Naive thymus-derived CD4-positive, alpha-beta T cell (primary cell): ENCODE measurements at regions of chr12 and their contacts with region 1.

Region 1: DNA sequence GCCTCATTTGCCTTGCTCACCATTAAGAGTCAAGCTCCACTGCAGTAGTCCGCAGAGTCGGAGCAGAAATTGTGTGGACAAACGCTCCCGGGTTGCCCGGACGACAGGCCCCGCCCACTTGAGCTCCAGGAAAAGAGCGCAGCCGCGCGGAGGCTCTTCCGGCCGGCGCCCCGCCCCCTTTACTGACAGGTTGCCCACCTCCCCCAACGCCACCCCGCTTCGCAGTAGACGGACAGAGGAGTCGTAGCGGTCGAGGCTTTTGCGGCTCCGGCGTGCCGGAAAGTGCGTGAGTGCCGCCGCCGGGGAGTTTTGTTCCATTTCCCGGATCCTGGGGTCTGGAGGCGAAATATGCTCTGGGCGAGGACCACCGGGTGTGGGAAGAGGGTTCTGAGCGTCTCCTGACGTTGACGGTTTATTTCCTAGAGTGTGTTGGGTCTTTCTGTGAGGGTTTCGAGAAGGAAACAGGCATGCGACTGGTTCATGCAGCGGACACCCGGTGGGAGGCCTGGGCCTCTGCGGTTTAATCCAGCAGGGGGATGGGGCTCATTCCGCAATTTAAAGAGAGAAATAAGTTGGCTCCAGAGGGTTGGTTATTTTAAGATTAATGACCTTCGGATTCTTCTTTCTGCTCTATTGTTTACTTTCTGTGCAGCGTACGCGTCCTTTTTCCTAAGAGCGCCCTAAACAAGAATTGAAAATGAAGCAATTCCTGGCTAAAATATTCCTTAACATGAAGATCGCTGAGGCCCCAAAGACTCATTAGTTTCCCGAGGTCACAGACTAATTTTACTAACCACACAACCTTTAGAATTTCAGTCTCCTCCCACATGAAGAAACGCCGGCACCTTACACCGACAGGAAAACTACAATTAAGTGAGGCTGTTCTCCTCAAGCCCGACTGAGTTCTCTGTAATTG is at the starts of genes DNAI7 and ETFRF1:
- DNase-seq: peak; percentile 93 to 98 (median 96)
- ATAC-seq: peak; percentile 99
- H3K4me3 ChIP-seq: peak within 1 kb of the TSS; percentile 90
- H3K4me3 Mint-ChIP-seq: peak within 1 kb of the TSS; percentile 89 to 100 (median 99)
- H3K27ac ChIP-seq: peak within 1 kb of the TSS; percentile 92
- H3K27ac Mint-ChIP-seq: peak within 1 kb of the TSS; percentile 97 to 100 (median 99)
- H3K4me1 ChIP-seq: peaks cover 7 to 8% of the 10 kb centered on the region in 2 donors
- H3K4me1 Mint-ChIP-seq: peaks cover 14 to 59% (median 47%) of the 10 kb centered on the region in 7 donors
- H3K27me3 ChIP-seq: no peaks in the 10 kb centered on the region
- H3K27me3 Mint-ChIP-seq: peaks cover 0 to 3% (median 0%) of the 10 kb centered on the region in 5 donors
- total RNA-seq, gene DNAI7: 0.34 to 0.72 (median 0.50) TPM in 4 of 5 experiments, not detected in the other
- total RNA-seq, gene ETFRF1: 12.9 to 39.5 (median 34.4) TPM

Region 2: DNA sequence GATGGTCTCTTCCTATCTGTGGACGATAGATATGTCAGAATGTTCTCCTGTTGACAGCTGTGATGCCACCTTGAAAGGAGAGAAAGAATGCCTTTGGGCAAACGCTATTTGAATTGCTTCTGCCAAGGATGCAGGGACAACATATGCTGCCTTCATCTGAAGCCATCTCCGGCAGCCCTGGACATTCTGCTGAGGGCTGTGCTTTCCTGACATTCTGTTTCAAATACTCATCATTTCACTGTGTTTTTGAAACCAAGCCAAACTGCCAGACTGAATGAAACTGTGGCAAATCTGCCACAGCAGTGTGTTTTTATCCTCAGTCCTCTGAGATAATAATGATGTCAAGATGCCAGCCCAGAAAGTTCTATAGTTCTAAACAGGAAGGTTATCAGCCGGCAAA is 160.6 kb before region 1 on chr12:
- CTCF ChIA-PET with region 1: no interaction called
- POLR2A ChIA-PET with region 1: no interaction called
- intact Hi-C with region 1: no loop called
- DNase-seq: no peak
- ATAC-seq: no peak
- H3K4me3 ChIP-seq: no peak overlapping the region
- H3K4me3 Mint-ChIP-seq: no peak overlapping the region
- H3K27ac ChIP-seq: no peak overlapping the region
- H3K27ac Mint-ChIP-seq: no peak overlapping the region
- H3K4me1 ChIP-seq: no peaks in the 10 kb centered on the region
- H3K4me1 Mint-ChIP-seq: no peaks in the 10 kb centered on the region
- H3K27me3 ChIP-seq: no peaks in the 10 kb centered on the region
- H3K27me3 Mint-ChIP-seq: peaks cover 0 to 30% (median 14%) of the 10 kb centered on the region in 5 donors

Region 3: GRCh38 chr12:25151476-25151875 is 43.8 kb before region 1 on chr12:
- CTCF ChIA-PET with region 1: interaction called, 4 read pairs
- POLR2A ChIA-PET with region 1: interaction called, 3 read pairs
- intact Hi-C with region 1: loop called in 1 of 2 experiments (anchors 1 kb)
- DNase-seq: no peak
- ATAC-seq: no peak
- H3K4me3 ChIP-seq: no peak overlapping the region
- H3K4me3 Mint-ChIP-seq: no peak overlapping the region
- H3K27ac ChIP-seq: no peak overlapping the region
- H3K27ac Mint-ChIP-seq: peak overlapping the region in 1 of 9 donors; percentile 0
- H3K4me1 ChIP-seq: no peaks in the 10 kb centered on the region
- H3K4me1 Mint-ChIP-seq: peaks cover 0 to 7% (median 6%) of the 10 kb centered on the region in 7 donors
- H3K27me3 ChIP-seq: no peaks in the 10 kb centered on the region
- H3K27me3 Mint-ChIP-seq: peaks cover 0 to 3% (median 0%) of the 10 kb centered on the region in 5 donors

Region 4: DNA sequence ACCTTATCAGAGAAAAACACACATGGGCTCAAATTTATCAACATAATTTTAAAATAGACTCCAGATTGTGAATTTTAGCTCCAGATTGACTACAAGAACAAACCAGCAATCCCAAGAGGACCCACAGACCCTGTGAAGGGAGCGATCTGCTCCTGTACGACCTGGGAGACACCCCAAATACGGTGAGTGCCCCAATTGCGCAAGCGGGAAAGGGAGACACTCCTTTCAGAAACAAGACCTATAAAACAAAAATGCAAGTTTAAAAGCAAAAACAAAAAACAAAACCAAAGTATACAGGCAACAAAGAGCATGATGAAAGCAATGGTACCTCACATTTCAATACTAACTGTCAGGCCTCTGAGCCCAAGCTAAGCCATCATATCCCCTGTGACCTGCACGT is 32.4 kb before region 1 on chr12:
- CTCF ChIA-PET with region 1: no interaction called
- POLR2A ChIA-PET with region 1: no interaction called
- intact Hi-C with region 1: no loop called
- DNase-seq: no peak
- ATAC-seq: no peak
- H3K4me3 ChIP-seq: no peak overlapping the region
- H3K4me3 Mint-ChIP-seq: no peak overlapping the region
- H3K27ac ChIP-seq: no peak overlapping the region
- H3K27ac Mint-ChIP-seq: no peak overlapping the region
- H3K4me1 ChIP-seq: no peaks in the 10 kb centered on the region
- H3K4me1 Mint-ChIP-seq: no peaks in the 10 kb centered on the region
- H3K27me3 ChIP-seq: no peaks in the 10 kb centered on the region
- H3K27me3 Mint-ChIP-seq: peaks cover 0 to 12% (median 0%) of the 10 kb centered on the region in 5 donors

Region 5: DNA sequence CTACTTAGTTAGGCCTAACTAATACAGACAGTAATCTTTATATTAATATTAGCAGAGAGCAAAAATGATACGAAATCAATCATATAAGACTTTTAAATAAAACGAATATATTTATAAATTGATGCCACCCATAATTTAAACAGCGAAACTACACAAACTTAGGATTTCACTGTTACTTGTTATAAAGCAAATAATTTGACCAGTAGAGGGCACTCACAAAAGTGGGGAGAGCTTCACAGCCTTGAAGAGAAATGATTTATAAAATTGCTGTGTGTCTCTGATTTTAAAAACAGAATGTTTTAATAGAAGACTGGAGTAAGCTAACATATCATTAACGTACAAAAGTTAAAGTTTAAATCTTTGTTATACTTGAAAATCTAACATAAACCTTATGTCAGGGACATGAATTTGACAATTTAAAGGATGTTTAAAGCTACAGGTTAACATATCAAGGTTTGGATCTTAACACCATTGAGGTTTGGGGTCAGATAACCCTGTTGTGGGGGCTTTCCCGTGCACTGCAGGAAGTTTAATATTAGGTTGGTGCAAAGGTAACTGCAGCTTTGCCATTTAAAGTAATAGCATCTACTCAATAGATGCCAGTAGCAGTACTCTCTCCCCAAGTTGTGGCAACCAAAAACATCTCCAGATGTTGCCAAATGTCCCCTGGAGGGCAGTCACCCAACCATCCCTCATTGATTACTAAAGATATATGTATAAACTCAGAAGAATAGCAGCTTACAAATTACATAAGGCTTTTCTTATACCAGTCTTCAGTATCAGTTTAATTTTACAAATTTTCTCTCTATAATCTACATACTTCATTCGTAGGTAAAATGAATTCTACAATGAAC is 46.1 kb after region 1 on chr12:
- CTCF ChIA-PET with region 1: interaction called, 3 read pairs
- POLR2A ChIA-PET with region 1: interaction called, 3 read pairs
- intact Hi-C with region 1: loop called in 1 of 2 experiments (anchors 2 kb)
- DNase-seq: peak in 7 of 9 donors; percentile 48 to 71 (median 64)
- ATAC-seq: peak; percentile 89
- H3K4me3 ChIP-seq: no peak overlapping the region
- H3K4me3 Mint-ChIP-seq: peak overlapping the region in 1 of 10 donors; percentile 21
- H3K27ac ChIP-seq: peak overlapping the region; percentile 20
- H3K27ac Mint-ChIP-seq: peak overlapping the region in 6 of 9 donors; percentile 44 to 84 (median 65)
- H3K4me1 ChIP-seq: peaks cover 10% of the 10 kb centered on the region in 2 donors
- H3K4me1 Mint-ChIP-seq: peaks cover 17 to 79% (median 53%) of the 10 kb centered on the region in 7 donors
- H3K27me3 ChIP-seq: no peaks in the 10 kb centered on the region
- H3K27me3 Mint-ChIP-seq: no peaks in the 10 kb centered on the region

Region 6: DNA sequence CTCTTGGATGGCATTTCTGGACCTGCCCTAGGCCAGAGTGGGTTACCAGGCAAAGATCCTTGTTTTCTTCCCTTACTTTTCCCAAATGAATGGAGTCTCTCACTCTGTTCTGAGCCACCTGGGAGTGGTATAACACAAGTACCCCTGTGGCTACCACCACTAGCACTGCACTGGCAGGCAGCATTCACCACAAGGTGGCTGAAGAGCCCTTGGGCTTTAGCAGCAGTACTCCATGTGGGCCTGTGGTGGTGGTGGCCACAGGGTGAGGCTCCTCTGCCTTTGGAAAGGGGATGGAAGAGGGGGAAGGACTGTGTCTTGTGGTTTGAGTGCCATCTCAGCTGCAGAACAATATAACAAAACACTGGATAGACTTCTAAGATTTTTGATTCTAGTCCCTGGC is 395.8 kb after region 1 on chr12:
- CTCF ChIA-PET with region 1: no interaction called
- POLR2A ChIA-PET with region 1: no interaction called
- intact Hi-C with region 1: loop called in 1 of 2 experiments (anchors 10 kb)
- DNase-seq: no peak
- ATAC-seq: no peak
- H3K4me3 ChIP-seq: no peak overlapping the region
- H3K4me3 Mint-ChIP-seq: peak overlapping the region in 1 of 10 donors; percentile 74
- H3K27ac ChIP-seq: no peak overlapping the region
- H3K27ac Mint-ChIP-seq: peak overlapping the region in 8 of 9 donors; percentile 20 to 98 (median 88)
- H3K4me1 ChIP-seq: peaks cover 0 to 42% of the 10 kb centered on the region in 2 donors
- H3K4me1 Mint-ChIP-seq: peaks cover 17 to 85% (median 62%) of the 10 kb centered on the region in 7 donors
- H3K27me3 ChIP-seq: no peaks in the 10 kb centered on the region
- H3K27me3 Mint-ChIP-seq: no peaks in the 10 kb centered on the region

Region 7: DNA sequence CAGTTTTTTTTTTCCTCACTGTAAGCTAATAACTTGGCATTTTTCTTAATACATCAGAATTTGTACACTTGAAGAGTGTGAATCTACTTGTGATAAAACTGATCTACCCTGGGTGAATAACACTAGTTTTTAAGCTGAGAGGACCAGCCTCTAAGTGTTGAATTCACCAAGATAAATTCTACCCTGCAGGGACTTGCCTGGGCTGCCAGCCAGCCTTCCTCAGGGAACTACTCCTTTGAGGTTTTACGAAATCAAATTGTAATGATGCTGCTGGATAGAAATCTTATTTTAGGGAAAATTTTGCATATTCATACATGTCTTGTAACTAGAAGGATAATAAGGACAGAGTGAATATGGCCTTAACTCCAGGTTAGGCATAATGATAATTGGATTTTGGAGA is 1829.0 kb after region 1 on chr12:
- CTCF ChIA-PET with region 1: no interaction called
- POLR2A ChIA-PET with region 1: no interaction called
- intact Hi-C with region 1: loop called in 1 of 2 experiments (anchors 5 kb)
- DNase-seq: no peak
- ATAC-seq: no peak
- H3K4me3 ChIP-seq: no peak overlapping the region
- H3K4me3 Mint-ChIP-seq: peak overlapping the region; percentile 34 to 100 (median 96)
- H3K27ac ChIP-seq: no peak overlapping the region
- H3K27ac Mint-ChIP-seq: no peak overlapping the region
- H3K4me1 ChIP-seq: peaks cover 17 to 25% of the 10 kb centered on the region in 2 donors
- H3K4me1 Mint-ChIP-seq: peaks cover 28 to 47% (median 43%) of the 10 kb centered on the region in 7 donors
- H3K27me3 ChIP-seq: no peaks in the 10 kb centered on the region
- H3K27me3 Mint-ChIP-seq: peaks cover 0 to 4% (median 0%) of the 10 kb centered on the region in 5 donors